ENCODE measurements at regions of chr1 and their contacts with region 1.

Region 1: GRCh38 chr1:241592273-241592958 is 47.8 kb downstream of the CHML start:
- DNase-seq: peak; percentile 64 to 87 (median 71)
- H3K4me3 ChIP-seq: no peak overlapping the region
- H3K4me3 Mint-ChIP-seq: no peak overlapping the region
- H3K27ac ChIP-seq: peak overlapping the region; percentile 30 to 68
- H3K27ac Mint-ChIP-seq: peak overlapping the region; percentile 67 to 94 (median 85)
- H3K4me1 ChIP-seq: peaks cover 34 to 36% of the 10 kb centered on the region in 2 donors
- H3K4me1 Mint-ChIP-seq: peaks cover 41% of the 10 kb centered on the region
- H3K27me3 ChIP-seq: no peaks in the 10 kb centered on the region
- H3K27me3 Mint-ChIP-seq: no peaks in the 10 kb centered on the region
- CTCF ChIP-seq: no peak

Region 2: DNA sequence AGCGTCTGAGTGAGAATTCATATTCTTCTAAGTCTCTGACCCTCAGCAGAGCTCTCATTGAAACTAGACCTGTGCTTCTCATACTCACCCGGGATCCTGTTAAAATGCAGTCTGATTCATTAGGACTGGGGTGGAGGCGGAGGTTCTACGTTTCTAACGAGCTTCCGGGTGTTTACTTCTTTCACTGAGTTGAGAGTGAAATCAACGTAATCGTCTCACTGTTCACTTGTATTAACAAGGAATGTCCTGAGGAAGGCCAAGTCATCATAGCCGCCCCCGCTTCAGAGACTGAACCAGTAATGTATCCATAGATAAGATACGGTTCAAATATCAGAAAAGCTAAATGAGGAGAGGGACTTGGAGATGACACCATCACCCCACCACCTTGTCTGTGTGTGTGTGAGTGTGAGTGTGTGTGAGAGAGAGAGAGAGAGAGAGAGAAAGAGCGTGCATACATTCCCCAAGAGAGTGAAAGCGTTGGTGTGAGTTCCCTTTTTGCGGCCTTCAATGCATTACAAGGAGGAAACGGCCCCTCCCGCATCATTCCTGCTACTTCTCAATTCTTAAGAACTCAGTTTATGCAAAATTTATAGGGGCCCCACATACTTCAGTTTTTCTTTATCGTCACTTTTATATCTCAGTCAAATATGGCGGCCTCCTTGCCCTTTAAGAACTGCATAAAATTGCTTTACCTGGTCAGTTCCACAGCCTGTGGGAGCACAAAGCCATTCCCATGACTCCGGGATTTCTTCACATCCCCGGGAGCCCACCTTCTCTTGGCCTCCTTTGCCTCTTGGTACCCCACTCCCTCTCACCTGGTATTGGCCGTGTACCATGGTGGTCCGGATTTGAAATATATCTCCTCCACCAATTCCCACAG is 40.4 kb before region 1 on chr1:
- intact Hi-C with region 1: loop called in 1 of 2 experiments (anchors 5 kb)
- DNase-seq: peak; percentile 93 to 96 (median 95)
- H3K4me3 ChIP-seq: peak overlapping the region; percentile 55 to 90 (median 76)
- H3K4me3 Mint-ChIP-seq: peak overlapping the region; percentile 84 to 94
- H3K27ac ChIP-seq: peak overlapping the region; percentile 80 to 100
- H3K27ac Mint-ChIP-seq: peak overlapping the region; percentile 98 to 100 (median 100)
- H3K4me1 ChIP-seq: peaks cover 38 to 39% of the 10 kb centered on the region in 2 donors
- H3K4me1 Mint-ChIP-seq: peaks cover 42% of the 10 kb centered on the region
- H3K27me3 ChIP-seq: no peaks in the 10 kb centered on the region
- H3K27me3 Mint-ChIP-seq: peaks cover 0 to 2% (median 0%) of the 10 kb centered on the region in 3 donors
- CTCF ChIP-seq: no peak